HEK293 (cell line): ENCODE measurements at regions of chr9 and their contacts with region 1.

Region 1: DNA sequence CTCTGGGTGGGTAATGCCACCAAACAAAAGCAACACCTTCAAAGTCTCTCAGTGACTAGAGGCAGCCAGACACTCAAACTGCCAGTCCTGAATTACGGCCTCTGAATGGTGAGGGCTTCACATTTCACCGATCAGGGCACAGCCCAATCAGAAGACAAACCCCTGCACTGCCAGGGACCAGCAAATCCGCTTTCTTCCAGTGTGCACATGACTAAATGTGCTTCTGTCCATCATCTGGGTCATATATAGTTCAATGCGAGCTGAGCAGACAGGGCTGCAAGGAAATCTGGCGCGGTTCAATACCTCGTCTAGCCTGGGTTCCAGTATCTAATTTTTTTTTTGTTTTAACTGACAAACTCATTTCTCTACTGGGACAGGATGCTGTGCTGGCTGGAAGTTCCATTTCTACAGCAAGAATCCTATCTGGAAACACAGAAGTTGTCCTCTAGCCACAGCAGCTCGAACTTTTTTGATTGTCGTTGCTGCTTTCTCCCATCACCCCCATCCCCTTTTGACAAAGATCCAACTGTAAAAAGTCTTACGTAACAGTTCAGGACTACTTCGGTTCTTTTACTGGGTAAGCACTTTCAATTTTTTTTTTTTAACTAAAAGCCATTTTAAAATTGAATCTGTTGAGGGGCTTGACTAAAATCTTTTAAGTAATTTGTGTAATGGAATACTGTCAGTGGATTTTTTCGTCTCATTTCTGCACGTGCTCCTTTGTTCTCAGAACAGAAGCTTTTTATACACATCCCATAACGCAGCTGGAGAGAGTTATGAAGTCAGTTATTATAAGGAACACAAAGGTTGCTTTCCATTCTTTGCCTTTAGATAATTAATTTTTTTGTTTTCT is 112.7 kb downstream of the NR6A1 start:
- H3K4me3 ChIP-seq: peak overlapping the region; percentile 57
- H3K27ac ChIP-seq: peak overlapping the region; percentile 72
- H3K4me1 ChIP-seq: peaks cover 6% of the 10 kb centered on the region; the same call in 1 of the 2 replicates
- CTCF ChIP-seq: no peak

Region 2: GRCh38 chr9:124639637-124640036 is 18.8 kb before region 1 on chr9:
- CTCF ChIA-PET with region 1: interaction called, 5 read pairs
- POLR2A ChIA-PET with region 1: interaction called, 10 read pairs
- H3K4me3 ChIP-seq: no peak overlapping the region
- H3K27ac ChIP-seq: no peak overlapping the region
- H3K4me1 ChIP-seq: no peaks in the 10 kb centered on the region
- CTCF ChIP-seq: no peak

Region 3: GRCh38 chr9:124675261-124676158 is 17.1 kb after region 1 on chr9:
- CTCF ChIA-PET with region 1: no interaction called
- POLR2A ChIA-PET with region 1: interaction called, 11 read pairs
- H3K4me3 ChIP-seq: no peak overlapping the region
- H3K27ac ChIP-seq: no peak overlapping the region
- H3K4me1 ChIP-seq: peaks cover 5% of the 10 kb centered on the region; the same call in 1 of the 2 replicates
- CTCF ChIP-seq: no peak